ENCODE measurements at regions of chr5 and their contacts with region 1.

Region 1: GRCh38 chr5:71752477-71753183 is 33.6 kb downstream of the CARTPT start:
- DNase-seq: no peak
- ATAC-seq: no peak
- H3K4me3 Mint-ChIP-seq: no peak overlapping the region
- H3K27ac Mint-ChIP-seq: no peak overlapping the region
- H3K4me1 Mint-ChIP-seq: peaks cover 2% of the 10 kb centered on the region
- H3K27me3 Mint-ChIP-seq: no peaks in the 10 kb centered on the region

Region 2: GRCh38 chr5:71658916-71659662 is 93.5 kb before region 1 on chr5:
- CTCF ChIA-PET with region 1: no interaction called
- POLR2A ChIA-PET with region 1: no interaction called
- intact Hi-C with region 1: loop called in 1 of 2 experiments (anchors 2 kb)
- DNase-seq: no peak
- ATAC-seq: no peak
- H3K4me3 Mint-ChIP-seq: no peak overlapping the region
- H3K27ac Mint-ChIP-seq: no peak overlapping the region
- H3K4me1 Mint-ChIP-seq: no peaks in the 10 kb centered on the region
- H3K27me3 Mint-ChIP-seq: no peaks in the 10 kb centered on the region